ENCODE measurements at regions of chr2 and their contacts with region 1.

Region 1: DNA sequence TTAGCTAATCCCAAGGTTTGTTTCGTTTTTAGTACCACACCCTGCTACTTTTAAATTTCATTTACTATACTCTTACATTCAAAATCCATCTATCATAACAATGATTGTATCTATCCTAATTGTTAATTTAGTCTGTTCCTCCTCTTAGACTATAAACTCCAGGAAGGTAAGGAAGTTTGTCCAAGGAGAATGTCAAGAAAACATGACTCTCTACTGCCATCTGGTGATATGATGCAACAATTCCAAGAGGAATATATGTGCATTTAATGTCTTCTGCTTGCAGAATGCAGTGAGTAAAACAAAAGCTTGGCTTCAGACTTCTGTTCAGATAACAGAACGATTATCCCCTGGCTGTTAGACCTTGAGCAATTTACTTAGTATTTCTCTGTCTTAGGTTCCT is 1267.1 kb downstream of the LRP1B start:
- DNase-seq: no peak
- H3K4me3 ChIP-seq: no peak overlapping the region
- H3K27me3 ChIP-seq: no peaks in the 10 kb centered on the region
- CTCF ChIP-seq: peak; percentile 57

Region 2: DNA sequence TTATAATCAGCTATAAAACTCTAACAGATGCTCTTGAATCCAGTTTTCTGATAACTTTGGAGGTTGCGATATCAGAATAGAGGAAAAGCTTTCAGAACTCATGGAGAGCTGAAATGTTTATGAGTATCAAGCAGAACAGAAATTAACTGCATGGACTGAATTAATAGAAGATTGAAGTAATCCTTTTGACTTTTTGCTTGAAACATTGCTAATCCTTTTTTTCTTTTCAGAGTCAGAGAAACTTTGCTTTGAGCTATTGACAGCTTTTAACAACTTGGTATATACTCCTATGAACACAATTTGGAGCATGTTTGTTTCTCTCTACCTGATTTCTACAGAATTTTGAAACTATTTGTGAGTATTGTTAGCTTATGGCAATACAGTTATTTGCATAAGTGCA is 12.3 kb after region 1 on chr2:
- CTCF ChIA-PET with region 1: interaction called, 12 read pairs
- POLR2A ChIA-PET with region 1: no interaction called
- DNase-seq: no peak
- H3K4me3 ChIP-seq: no peak overlapping the region
- H3K27me3 ChIP-seq: no peaks in the 10 kb centered on the region
- CTCF ChIP-seq: no peak

Region 3: GRCh38 chr2:141151611-141152286 is 288.0 kb after region 1 on chr2:
- CTCF ChIA-PET with region 1: no interaction called
- POLR2A ChIA-PET with region 1: no interaction called
- DNase-seq: no peak
- H3K4me3 ChIP-seq: no peak overlapping the region
- H3K27me3 ChIP-seq: no peaks in the 10 kb centered on the region
- CTCF ChIP-seq: no peak

Measured in BJ (cell line).